ENCODE measurements at regions of chr19 and their contacts with region 1.

Region 1: DNA sequence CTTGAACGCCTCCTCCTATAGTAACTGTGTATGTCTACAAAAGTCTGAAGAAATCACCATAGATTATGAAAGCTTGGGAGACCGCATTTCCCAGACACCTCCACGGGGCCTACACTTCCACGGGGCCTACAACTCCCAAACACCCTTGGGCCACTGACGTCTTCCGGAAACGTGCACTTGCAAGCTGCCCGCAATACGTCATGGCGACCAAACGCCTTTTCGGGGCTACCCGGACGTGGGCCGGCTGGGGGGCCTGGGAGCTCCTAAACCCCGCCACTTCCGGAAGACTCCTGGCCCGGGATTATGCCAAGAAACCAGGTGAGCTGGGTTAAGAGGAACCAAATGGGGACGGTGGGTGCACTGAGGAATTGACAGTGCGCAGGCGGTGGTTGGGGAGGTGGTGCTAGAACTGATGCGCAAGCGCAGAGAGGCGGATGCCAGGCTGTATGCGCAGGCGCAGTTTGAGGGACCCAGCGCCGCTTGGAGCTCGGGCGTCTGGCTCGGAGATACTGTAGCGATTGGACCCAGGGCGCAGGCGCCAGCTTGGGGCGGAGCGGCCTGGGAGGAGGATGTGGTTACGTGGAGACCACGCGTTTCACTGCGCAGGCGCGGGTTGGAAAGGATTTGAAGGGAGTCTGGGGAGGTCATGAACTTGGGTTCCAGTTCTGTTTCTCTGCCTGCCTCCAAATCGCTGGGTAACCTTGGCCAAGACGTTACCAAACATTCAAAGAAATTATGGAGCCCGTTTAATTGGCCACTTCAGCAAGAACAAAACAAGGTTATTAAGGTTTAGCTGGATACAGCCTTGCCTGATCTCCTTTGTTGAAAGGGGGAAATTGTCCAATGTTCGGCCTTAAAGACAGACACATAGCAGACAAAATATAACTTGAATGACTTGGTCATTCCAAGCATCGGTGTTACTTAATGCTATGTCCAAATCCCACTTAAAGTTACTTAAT is at the start of gene MRPL54:
- DNase-seq: peak; percentile 96
- H3K4me3 ChIP-seq: peak within 1 kb of the TSS; percentile 94
- CTCF ChIP-seq: no peak

Region 2: DNA sequence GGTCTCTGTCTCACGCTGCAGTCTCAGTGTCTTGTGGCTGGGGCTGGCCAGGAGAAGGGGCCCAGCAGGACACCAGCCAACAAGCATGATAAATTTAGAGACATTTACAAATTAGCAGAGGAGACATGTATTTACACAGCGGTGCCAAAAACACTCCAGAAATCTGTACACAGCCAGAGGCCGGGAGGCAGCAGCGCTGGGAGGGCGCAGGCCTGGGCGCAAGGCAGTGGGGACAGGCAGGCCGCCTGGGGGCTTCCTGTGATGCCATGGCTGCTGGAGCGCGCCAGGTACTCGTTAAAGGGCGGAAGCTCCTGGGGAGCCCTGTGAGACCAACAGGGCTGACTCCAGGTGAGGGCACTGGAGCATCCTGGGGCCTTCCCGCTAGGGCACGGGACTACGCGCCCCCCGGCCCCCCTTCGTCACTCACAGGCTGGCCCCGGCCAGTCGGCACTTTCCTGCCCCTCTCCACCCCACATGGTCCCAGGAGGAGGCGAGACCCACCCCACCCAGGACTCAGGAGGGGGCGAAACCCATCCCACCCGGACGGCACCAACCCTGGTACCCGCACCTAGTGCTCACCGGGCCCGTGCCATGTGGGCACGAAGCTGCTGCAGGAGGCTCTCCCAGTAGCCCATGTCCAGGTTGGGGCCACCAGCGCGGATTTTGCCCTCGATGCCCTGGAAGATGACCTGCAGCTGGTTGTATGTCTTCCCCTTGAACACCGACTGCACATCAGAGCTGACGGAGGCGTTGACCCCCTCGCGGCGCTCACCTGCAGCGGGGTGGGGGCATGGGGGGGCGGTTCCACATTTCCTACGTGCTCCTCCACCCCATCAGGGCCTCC is 148.7 kb before region 1 on chr19:
- CTCF ChIA-PET with region 1: no interaction called
- POLR2A ChIA-PET with region 1: no interaction called
- DNase-seq: no peak
- H3K4me3 ChIP-seq: no peak overlapping the region
- CTCF ChIP-seq: no peak

Region 3: DNA sequence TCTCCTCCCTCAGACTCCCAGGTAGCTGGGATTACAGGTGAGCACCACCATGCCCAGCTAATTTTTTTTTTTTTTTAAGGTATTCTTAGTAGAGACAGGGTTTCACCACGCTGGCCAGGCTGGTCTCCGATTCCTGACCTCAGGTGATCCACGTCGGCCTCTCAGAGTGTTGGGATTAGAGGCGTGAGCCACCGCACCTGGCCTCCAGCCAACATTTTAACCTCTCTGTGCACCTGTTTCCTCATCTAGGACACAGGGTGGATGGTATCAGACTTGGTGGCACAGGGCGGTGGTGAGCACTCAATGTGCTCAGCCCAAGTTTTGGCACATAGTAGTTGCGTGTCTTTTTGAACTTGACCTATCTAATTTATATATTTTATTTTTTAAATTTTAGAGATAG is 13.8 kb before region 1 on chr19:
- CTCF ChIA-PET with region 1: interaction called, 33 read pairs
- POLR2A ChIA-PET with region 1: no interaction called
- DNase-seq: no peak
- H3K4me3 ChIP-seq: no peak overlapping the region
- CTCF ChIP-seq: no peak

Region 4: GRCh38 chr19:3788996-3789778 is 26.4 kb after region 1 on chr19:
- CTCF ChIA-PET with region 1: no interaction called
- POLR2A ChIA-PET with region 1: no interaction called
- DNase-seq: no peak
- H3K4me3 ChIP-seq: no peak overlapping the region
- CTCF ChIP-seq: no peak